Dorsolateral prefrontal cortex (tissue), 120 donors: ENCODE measurements at regions of chr20 and their contacts with region 1.

Region 1: DNA sequence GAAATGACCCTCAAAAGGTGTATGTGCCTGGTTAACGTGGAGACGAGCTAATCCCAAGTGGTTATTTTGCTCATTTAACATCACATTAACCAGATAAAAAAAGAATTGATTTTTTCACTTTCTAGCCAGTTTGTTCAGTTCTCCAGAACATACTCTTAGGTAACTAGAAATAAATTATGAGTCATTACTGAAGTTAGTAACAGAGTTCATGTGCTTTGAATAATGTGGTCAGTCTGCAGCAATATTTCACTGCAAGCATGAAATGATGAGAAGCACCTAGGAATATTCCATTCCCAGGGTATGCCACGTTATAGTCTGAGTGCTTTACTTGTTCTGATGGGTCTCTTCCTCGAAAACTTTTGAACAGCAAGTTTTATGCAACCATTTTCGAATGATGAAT is 138.3 kb upstream of the INSM1 start:
- DNase-seq: no peak
- H3K4me3 ChIP-seq: no peak overlapping the region
- H3K27ac ChIP-seq: no peak overlapping the region
- H3K27me3 ChIP-seq: no peaks in the 10 kb centered on the region
- CTCF ChIP-seq: no peak

Region 2: GRCh38 chr20:20188647-20189046 is 40.9 kb before region 1 on chr20:
- intact Hi-C with region 1: no loop called
- DNase-seq: no peak
- H3K4me3 ChIP-seq: no peak overlapping the region
- H3K27ac ChIP-seq: no peak overlapping the region
- H3K27me3 ChIP-seq: no peaks in the 10 kb centered on the region
- CTCF ChIP-seq: no peak

Region 3: DNA sequence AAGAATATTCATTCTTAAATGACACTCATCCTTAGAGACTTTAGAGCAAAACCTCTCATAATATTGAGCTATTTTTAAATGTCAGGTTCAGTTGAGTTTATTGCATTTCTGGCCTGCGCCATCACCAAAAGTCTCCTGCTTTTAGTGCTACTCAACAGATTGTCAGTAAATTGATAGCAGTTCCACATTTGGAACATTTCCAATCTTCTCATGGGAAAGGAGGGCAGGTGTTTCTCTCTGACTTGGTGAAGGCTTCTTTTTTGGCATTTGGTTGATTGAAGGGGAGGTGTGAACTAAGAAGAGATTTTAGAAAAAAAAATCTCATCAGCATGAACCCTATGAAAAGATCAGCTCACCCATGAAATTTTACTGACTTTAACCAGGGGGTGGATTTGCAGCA is 12.4 kb after region 1 on chr20:
- intact Hi-C with region 1: no loop called
- DNase-seq: no peak
- H3K4me3 ChIP-seq: no peak overlapping the region
- H3K27ac ChIP-seq: no peak overlapping the region
- H3K27me3 ChIP-seq: no peaks in the 10 kb centered on the region
- CTCF ChIP-seq: no peak

Region 4: GRCh38 chr20:20334489-20334888 is 104.9 kb after region 1 on chr20:
- intact Hi-C with region 1: loop called in 1 of 2 experiments (anchors 10 kb)
- DNase-seq: no peak
- H3K4me3 ChIP-seq: no peak overlapping the region
- H3K27ac ChIP-seq: peak overlapping the region in 14 of 59 donors; percentile 7 to 68 (median 40)
- H3K27me3 ChIP-seq: no peaks in the 10 kb centered on the region
- CTCF ChIP-seq: no peak